SK-N-SH (cell line): ENCODE measurements at regions of chr5 and their contacts with region 1.

Region 1: DNA sequence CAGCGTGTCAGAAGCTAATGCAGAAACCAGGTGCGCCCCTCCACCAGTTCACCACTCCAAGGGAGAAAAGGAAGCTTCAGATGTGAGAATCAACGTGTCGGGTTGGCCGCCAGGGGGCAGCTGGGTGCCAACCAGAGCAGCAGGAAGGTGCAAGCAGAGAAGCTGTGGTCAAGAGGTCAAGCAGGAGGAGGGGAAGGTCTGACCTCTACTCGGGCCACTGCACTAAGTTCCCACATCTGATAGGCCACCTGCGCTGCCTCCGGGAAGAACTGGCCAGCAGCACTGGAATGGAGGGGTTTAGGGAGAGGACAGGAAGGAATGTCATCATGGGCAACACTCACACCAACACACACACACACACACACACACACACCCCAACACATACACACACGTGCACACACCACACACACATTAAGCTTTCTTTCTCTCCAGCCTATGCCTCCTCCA is 31.4 kb downstream of the ANXA6 start:
- DNase-seq: peak; percentile 75
- H3K4me3 ChIP-seq: peak overlapping the region in 1 of 2 experiments; percentile 32; a peak in 1 of 4 replicates
- H3K27ac ChIP-seq: no peak overlapping the region
- H3K4me1 ChIP-seq: no peaks in the 10 kb centered on the region; a peak in 1 of 4 replicates
- H3K27me3 ChIP-seq: no peaks in the 10 kb centered on the region
- CTCF ChIP-seq: peak; percentile 81
- EP300 ChIP-seq: no peak
- RAD21 ChIP-seq: peak; percentile 79

Region 2: GRCh38 chr5:151093476-151093889 is 32.7 kb before region 1 on chr5:
- CTCF ChIA-PET with region 1: interaction called, 11 read pairs
- POLR2A ChIA-PET with region 1: no interaction called
- DNase-seq: no peak
- H3K4me3 ChIP-seq: no peak overlapping the region
- H3K27ac ChIP-seq: peak overlapping the region in 1 of 2 experiments; percentile 69; a peak in 2 of 4 replicates
- H3K4me1 ChIP-seq: peaks cover 12 to 23% of the 10 kb centered on the region in 2 experiments; a peak in 3 of 4 replicates
- H3K27me3 ChIP-seq: no peaks in the 10 kb centered on the region
- CTCF ChIP-seq: no peak
- EP300 ChIP-seq: peak in 1 of 2 experiments; percentile 64; a peak in 1 of 4 replicates
- RAD21 ChIP-seq: no peak

Region 3: DNA sequence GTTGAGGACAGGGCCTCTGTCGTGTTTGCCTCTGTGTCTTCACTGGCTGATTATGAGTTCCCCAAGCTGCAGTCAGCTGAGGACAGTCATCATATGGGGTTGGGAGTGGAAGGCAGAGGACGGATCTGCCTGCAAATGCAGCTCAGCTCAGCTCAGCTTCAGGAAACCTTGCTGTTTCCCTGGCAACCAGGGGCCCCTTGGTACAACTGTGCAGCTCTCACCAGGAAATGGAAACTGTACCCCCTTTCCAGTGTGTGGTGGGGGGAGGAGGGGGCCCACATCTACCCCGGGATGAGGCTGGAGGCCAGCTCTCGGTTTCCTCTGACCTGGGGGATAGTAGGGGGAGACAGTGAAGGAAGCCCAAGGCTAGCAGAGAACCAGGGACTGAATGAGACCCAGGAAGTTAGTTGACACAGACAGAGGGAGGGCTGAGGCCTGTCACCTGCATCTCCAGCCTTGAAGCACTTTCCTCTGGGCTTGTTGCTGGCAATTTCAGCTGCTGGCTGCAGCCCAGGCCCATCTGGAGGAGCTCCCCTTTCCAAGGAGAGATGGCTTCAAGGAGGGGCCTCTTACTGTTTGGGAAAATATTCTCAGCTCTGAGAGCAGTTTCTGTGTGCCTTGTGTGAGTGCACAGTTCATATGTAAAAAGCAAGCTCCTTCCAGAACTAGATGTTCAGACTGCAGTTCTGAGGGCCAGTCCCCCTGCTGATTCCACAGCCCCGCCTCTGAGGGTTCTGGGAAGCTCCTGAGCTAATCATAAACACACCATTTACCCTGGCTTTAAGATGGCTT is 24.4 kb after region 1 on chr5:
- CTCF ChIA-PET with region 1: interaction called, 26 read pairs
- POLR2A ChIA-PET with region 1: interaction called, 3 read pairs
- DNase-seq: peak; percentile 42
- H3K4me3 ChIP-seq: no peak overlapping the region
- H3K27ac ChIP-seq: peak overlapping the region; percentile 12 to 77
- H3K4me1 ChIP-seq: peaks cover 20 to 28% of the 10 kb centered on the region in 2 experiments; a peak in 2 of 4 replicates
- H3K27me3 ChIP-seq: no peaks in the 10 kb centered on the region
- CTCF ChIP-seq: no peak
- EP300 ChIP-seq: no peak
- RAD21 ChIP-seq: no peak

Region 4: GRCh38 chr5:151164686-151165392 is 38.6 kb after region 1 on chr5:
- CTCF ChIA-PET with region 1: interaction called, 540 read pairs
- POLR2A ChIA-PET with region 1: interaction called, 8 read pairs
- DNase-seq: peak; percentile 76
- H3K4me3 ChIP-seq: peak overlapping the region in 1 of 2 experiments; percentile 34; a peak in 1 of 4 replicates
- H3K27ac ChIP-seq: no peak overlapping the region
- H3K4me1 ChIP-seq: no peaks in the 10 kb centered on the region
- H3K27me3 ChIP-seq: no peaks in the 10 kb centered on the region; the same call in 1 of the 2 replicates
- CTCF ChIP-seq: peak; percentile 93
- EP300 ChIP-seq: no peak
- RAD21 ChIP-seq: peak; percentile 97

Region 5: DNA sequence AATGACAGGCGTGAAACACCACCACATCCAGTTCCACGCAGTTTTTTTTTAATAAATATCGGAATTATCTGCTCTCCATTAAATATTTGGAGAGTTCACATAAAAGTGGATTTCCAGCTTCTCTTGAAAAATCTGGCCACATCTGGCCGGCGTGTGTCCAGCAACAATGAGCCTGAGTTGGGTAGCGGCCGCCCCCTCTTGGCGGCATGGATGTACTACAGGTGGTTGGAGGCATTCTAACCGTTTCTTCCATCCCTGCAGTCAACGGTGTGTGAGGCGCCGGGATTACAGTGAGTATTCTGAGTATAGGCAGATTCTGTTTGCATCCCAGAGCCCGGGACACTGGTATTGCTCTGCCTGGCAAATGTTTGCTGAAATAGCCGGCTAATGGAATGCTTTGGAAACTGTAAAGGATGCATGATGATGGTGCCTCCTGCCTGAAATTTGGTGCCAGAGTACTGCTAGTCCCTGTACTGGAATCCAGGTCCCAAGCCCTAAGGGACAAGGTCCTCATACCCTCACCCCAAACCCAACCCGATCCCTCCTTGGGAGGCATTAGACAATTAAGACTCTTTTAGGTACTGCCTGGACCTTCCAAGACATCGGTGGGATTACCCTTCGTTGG is 113.1 kb after region 1 on chr5:
- CTCF ChIA-PET with region 1: interaction called, 32 read pairs
- POLR2A ChIA-PET with region 1: no interaction called
- DNase-seq: peak; percentile 85
- H3K4me3 ChIP-seq: peak overlapping the region in 1 of 2 experiments; percentile 11; a peak in 1 of 4 replicates
- H3K27ac ChIP-seq: no peak overlapping the region
- H3K4me1 ChIP-seq: no peaks in the 10 kb centered on the region
- H3K27me3 ChIP-seq: no peaks in the 10 kb centered on the region
- CTCF ChIP-seq: peak; percentile 77
- EP300 ChIP-seq: no peak
- RAD21 ChIP-seq: peak; percentile 76